ENCODE measurements at regions of chr12 and their contacts with region 1.

Region 1: DNA sequence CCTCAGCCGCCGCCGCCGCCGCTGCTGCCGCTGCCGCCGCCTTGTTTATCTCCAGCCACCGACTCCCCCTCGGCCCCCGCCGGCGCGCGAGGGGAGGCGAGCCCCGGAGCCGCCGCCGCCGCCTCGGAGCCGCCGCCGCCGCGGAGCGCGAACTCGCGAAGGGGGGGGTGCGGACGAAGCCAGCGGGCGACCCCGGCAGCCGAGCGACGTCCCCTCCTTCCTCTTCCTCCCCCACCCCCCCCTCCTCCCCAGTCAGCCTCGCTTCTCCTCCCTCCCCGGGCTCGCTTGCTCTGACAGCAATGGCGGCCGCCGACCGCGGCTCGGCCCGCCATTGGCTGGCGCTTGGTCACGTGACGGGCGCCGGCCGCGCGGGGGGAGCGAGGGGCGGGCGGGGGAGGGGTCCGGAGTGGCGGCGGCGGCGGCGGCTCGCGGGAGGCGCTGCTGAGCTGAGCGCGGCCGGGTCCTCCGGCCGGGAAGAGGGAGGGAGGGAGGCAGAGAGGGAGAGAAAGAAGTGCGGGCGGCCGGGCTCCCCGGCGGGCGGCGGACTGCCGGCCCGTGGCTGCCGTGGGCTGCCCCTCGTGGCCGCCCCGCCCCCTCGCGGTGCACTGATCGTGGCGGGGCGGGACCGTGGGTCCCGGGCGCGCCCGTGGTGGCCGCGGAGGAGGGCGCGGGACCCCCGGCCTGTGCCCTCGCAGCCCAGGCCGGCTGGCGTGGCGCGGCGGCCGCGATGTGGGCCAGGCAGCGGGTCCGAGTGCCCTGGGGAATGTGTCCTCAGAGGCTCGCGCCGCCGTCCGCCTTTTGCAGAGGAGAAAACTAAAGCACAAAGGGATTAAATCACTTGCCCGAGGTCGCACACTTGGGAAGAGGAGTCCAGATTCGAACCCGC is at the start of gene MED13L:
- DNase-seq: peak; percentile 80 to 88
- ATAC-seq: peak; percentile 85 to 86
- H3K4me3 ChIP-seq: peak within 1 kb of the TSS; percentile 69 to 95 (median 88)
- H3K27ac ChIP-seq: peak within 1 kb of the TSS; percentile 87 to 99 (median 96)
- H3K4me1 ChIP-seq: peaks cover 28 to 37% of the 10 kb centered on the region in 2 donors
- H3K27me3 ChIP-seq: no peaks in the 10 kb centered on the region
- CTCF ChIP-seq: peak in 3 of 5 experiments; percentile 30 to 73 (median 52)
- POLR2A ChIP-seq: peak; percentile 83 to 86
- total RNA-seq, gene MED13L: 59.5 to 92.6 (median 74.1) TPM

Region 2: GRCh38 chr12:116220756-116221155 is 56.9 kb before region 1 on chr12:
- in situ Hi-C with region 1: no loop called
- intact Hi-C with region 1: no loop called
- DNase-seq: no peak
- ATAC-seq: no peak
- H3K4me3 ChIP-seq: no peak overlapping the region
- H3K27ac ChIP-seq: no peak overlapping the region
- H3K4me1 ChIP-seq: peaks cover 52 to 54% of the 10 kb centered on the region in 2 donors
- H3K27me3 ChIP-seq: no peaks in the 10 kb centered on the region
- CTCF ChIP-seq: no peak
- POLR2A ChIP-seq: no peak

Region 3: DNA sequence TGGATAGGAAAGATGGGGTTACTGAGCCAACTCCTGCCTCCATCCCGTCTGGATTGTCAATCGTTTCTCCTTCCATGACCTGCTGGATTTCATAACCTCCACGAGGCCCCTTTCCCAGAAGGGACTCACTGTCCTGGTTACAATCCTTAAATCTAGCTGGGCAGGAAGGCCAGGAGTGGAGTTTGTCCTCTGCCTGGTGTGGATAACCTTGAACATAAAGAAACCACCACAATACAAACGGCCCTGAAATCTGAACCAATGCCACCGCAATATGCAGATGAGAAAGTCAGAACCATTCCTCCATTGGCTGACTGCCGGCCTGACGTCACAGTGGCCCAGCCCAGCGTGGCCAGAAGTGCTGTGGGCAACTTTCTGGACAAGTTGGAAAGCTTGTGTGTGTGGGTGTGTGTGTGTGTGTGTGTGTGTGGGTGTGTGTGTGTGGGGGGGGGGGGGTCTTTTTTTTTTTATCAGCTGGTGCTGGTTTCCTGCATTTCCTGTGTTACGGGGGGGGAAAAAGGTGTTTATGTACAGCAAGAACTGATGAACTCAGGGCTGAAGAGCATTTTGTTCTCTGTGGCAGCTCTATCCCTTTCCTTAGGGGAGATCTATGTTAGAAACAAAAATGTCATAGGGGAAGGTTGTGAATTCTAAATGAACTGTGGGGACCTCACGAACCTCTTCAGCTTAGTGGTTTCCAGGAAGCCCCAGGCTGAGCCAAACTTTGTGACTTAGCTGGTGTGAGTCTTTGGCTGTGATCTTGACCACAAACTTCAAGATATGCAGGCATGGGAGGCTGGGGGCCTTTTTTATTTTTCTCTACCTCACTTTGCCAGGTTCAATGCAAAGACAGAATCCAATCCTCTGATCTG is 81.5 kb after region 1 on chr12:
- in situ Hi-C with region 1: no loop called
- intact Hi-C with region 1: loop called (anchors 1 kb)
- DNase-seq: peak; percentile 84 to 91
- ATAC-seq: peak; percentile 89 to 90
- H3K4me3 ChIP-seq: peak overlapping the region in 1 of 4 donors; percentile 22
- H3K27ac ChIP-seq: peak overlapping the region; percentile 69 to 80 (median 76)
- H3K4me1 ChIP-seq: peaks cover 23 to 30% of the 10 kb centered on the region in 2 donors
- H3K27me3 ChIP-seq: no peaks in the 10 kb centered on the region
- CTCF ChIP-seq: no peak
- POLR2A ChIP-seq: no peak

Region 4: GRCh38 chr12:116533343-116534251 is 256.0 kb after region 1 on chr12:
- in situ Hi-C with region 1: no loop called
- intact Hi-C with region 1: loop called (anchors 5 kb)
- DNase-seq: peak; percentile 31 to 58
- ATAC-seq: peak; percentile 77 to 80
- H3K4me3 ChIP-seq: peak overlapping the region; percentile 50 to 88 (median 74)
- H3K27ac ChIP-seq: peak overlapping the region; percentile 75 to 81 (median 80)
- H3K4me1 ChIP-seq: peaks cover 5 to 11% of the 10 kb centered on the region in 2 donors
- H3K27me3 ChIP-seq: no peaks in the 10 kb centered on the region
- CTCF ChIP-seq: no peak
- POLR2A ChIP-seq: peak in 1 of 2 donors; percentile 36